ENCODE measurements at regions of chr18 and their contacts with region 1.

Region 1: DNA sequence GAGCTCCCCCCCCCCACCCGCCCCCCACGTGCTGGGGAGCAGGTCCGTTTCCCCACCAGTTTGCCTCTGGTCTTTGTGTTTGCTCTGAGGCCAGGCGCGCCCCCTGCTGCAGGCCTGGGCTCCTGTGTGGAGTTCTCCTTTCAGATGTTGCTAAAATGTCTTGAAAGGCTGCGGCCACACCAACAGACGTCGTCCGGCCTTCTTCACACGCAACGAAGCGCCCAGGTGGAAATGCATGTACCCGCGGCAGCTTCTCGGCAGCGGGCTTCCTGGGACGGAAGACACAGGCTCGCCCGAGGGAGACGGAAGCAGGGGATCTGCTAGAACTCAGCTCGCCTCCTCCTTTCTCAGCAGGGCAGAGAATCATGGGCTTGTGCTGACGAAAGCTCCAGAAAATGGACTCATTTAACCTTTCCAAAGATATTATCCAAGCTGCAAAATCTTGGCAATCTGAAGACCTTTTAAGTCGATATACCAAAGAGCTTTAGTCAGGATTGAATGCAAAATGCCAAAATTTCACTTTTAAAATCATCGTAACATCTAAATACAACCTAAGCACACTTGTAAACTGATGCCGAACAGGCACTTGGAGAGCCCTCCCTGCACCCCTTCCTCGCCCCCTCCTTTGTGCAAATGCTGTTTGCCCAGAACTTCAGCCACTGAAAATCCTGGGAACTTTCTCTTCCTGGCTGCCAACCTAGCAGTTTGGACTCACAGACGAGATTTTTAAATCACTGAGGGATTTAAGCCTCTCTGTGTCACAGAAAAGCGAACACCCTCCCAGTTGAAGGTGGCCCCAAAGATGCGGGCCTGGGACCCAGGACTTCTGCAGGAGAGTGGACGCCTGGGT is 125.5 kb upstream of the ZNF516 start:
- DNase-seq: peak in 7 of 9 donors; percentile 2 to 24 (median 16)
- ATAC-seq: peak; percentile 76
- H3K4me3 ChIP-seq: no peak overlapping the region
- H3K4me3 Mint-ChIP-seq: peak overlapping the region; percentile 35 to 78 (median 66)
- H3K27ac ChIP-seq: peak overlapping the region; percentile 21
- H3K27ac Mint-ChIP-seq: no peak overlapping the region
- H3K4me1 ChIP-seq: no peaks in the 10 kb centered on the region
- H3K4me1 Mint-ChIP-seq: peaks cover 4 to 26% (median 17%) of the 10 kb centered on the region in 7 donors
- H3K27me3 ChIP-seq: no peaks in the 10 kb centered on the region
- H3K27me3 Mint-ChIP-seq: peaks cover 0 to 46% (median 19%) of the 10 kb centered on the region in 5 donors

Region 2: GRCh38 chr18:76405681-76406356 is 214.7 kb before region 1 on chr18:
- CTCF ChIA-PET with region 1: interaction called, 4 read pairs
- POLR2A ChIA-PET with region 1: no interaction called
- intact Hi-C with region 1: loop called in 1 of 2 experiments (anchors 2 kb)
- DNase-seq: peak in 7 of 9 donors; percentile 14 to 54 (median 36)
- ATAC-seq: peak; percentile 51
- H3K4me3 ChIP-seq: no peak overlapping the region
- H3K4me3 Mint-ChIP-seq: no peak overlapping the region
- H3K27ac ChIP-seq: no peak overlapping the region
- H3K27ac Mint-ChIP-seq: peak overlapping the region in 1 of 9 donors; percentile 48
- H3K4me1 ChIP-seq: peaks cover 0 to 2% of the 10 kb centered on the region in 2 donors
- H3K4me1 Mint-ChIP-seq: peaks cover 6 to 62% (median 43%) of the 10 kb centered on the region in 7 donors
- H3K27me3 ChIP-seq: no peaks in the 10 kb centered on the region
- H3K27me3 Mint-ChIP-seq: peaks cover 0 to 5% (median 0%) of the 10 kb centered on the region in 5 donors

Measured in naive thymus-derived CD4-positive, alpha-beta T cell (primary cell).